ENCODE measurements at regions of chr5 and their contacts with region 1.

Region 1: DNA sequence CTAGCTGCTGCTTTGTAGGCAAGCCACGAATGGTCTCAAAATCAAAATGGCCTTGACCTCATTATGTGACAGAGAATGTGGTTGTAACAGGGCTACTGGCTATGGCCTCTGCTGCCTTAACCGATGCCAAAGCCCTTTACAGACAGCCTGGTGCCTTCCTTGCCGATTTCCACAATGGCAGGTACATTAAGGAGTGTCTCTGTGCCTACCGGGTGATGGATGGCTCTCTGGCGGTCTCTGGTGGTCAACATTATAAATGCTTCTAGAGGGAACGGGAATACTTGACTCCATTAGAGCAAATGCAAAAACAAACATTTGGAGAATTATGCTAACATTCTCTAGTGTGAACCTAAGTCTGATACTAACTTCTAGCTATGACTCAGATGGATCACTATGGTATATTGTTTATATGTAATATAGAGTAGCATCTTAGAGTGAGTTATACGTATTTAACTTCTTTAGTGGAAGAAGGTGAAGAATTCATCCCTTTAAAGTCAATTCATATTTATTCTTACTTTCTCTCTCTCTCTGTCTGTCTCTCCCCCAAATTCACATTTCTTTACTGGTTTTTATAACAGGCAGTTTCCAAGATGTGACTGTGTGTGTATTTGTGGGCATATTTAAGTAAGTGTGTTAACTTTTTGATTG is 52.5 kb downstream of the RPS23 start:
- DNase-seq: peak; percentile 71
- H3K4me3 Mint-ChIP-seq: no peak overlapping the region
- H3K27ac Mint-ChIP-seq: no peak overlapping the region
- H3K4me1 Mint-ChIP-seq: peaks cover 2% of the 10 kb centered on the region
- H3K27me3 Mint-ChIP-seq: no peaks in the 10 kb centered on the region

Region 2: DNA sequence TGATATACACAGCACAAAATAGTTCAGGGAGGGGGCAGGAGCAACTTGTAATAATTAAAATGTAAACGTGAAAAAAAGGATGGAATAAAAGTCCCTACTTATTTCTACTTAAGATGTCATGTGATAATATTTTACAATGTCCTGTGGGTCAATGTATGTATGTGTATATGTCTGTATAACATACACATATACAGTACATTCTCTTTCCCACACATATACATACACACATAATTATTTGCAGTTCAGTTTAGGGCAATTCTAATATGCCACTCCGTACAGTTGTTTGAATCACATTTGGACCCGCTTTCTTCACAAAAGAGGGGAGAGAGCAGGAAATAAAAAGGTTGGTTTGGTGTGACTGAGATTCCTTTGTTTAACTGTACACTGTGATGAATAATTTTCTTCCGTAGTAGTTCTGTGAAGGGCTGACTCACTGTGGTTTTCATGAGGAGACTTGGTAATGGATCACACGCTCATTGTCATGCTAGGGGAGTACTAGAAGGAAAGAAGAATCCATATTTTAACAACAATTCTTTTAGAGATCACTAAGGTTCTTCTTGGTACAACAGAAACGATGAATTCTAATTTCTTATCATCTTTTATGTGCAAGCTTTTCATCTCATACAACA is 805.5 kb before region 1 on chr5:
- CTCF ChIA-PET with region 1: interaction called, 10 read pairs
- POLR2A ChIA-PET with region 1: no interaction called
- intact Hi-C with region 1: loop called (anchors 1 kb)
- DNase-seq: no peak
- H3K4me3 Mint-ChIP-seq: no peak overlapping the region
- H3K27ac Mint-ChIP-seq: peak overlapping the region; percentile 21
- H3K4me1 Mint-ChIP-seq: peaks cover 14% of the 10 kb centered on the region
- H3K27me3 Mint-ChIP-seq: no peaks in the 10 kb centered on the region

Region 3: GRCh38 chr5:82174128-82174918 is 51.3 kb before region 1 on chr5:
- CTCF ChIA-PET with region 1: interaction called, 4 read pairs
- POLR2A ChIA-PET with region 1: no interaction called
- intact Hi-C with region 1: loop called (anchors 1 kb)
- DNase-seq: peak; percentile 76
- H3K4me3 Mint-ChIP-seq: no peak overlapping the region
- H3K27ac Mint-ChIP-seq: no peak overlapping the region
- H3K4me1 Mint-ChIP-seq: peaks cover 11% of the 10 kb centered on the region
- H3K27me3 Mint-ChIP-seq: no peaks in the 10 kb centered on the region

Region 4: GRCh38 chr5:82512025-82512424 is 286.4 kb after region 1 on chr5:
- CTCF ChIA-PET with region 1: no interaction called
- POLR2A ChIA-PET with region 1: no interaction called
- intact Hi-C with region 1: no loop called
- DNase-seq: peak; percentile 32
- H3K4me3 Mint-ChIP-seq: no peak overlapping the region
- H3K27ac Mint-ChIP-seq: no peak overlapping the region
- H3K4me1 Mint-ChIP-seq: peaks cover 4% of the 10 kb centered on the region
- H3K27me3 Mint-ChIP-seq: no peaks in the 10 kb centered on the region

Region 5: DNA sequence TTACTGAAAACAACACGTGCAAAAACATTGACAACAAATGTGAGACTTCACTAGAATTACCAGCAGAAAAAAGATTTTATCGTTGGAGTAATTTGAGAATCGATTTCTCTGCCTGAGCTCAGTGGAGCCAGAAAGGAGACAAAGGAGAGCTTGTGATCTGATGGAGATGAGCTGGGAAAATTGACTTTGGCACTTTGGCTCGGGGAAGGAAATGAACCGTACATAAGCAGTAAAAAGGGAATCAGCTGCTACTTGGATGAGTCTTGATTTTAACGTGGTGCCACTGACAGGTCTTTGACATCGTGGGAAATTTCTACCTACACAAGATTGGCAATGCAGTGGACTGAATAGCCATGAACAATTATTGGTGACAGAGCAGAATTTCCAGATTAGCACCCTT is 297.2 kb after region 1 on chr5:
- CTCF ChIA-PET with region 1: no interaction called
- POLR2A ChIA-PET with region 1: no interaction called
- intact Hi-C with region 1: no loop called
- DNase-seq: no peak
- H3K4me3 Mint-ChIP-seq: no peak overlapping the region
- H3K27ac Mint-ChIP-seq: no peak overlapping the region
- H3K4me1 Mint-ChIP-seq: peaks cover 10% of the 10 kb centered on the region
- H3K27me3 Mint-ChIP-seq: peaks cover 4% of the 10 kb centered on the region

Measured in activated CD4-positive, alpha-beta memory T cell treated with anti-CD3 and anti-CD28 coated beads for 36 hours (primary cell).